ENCODE measurements at regions of chr22 and their contacts with region 1.

Region 1: GRCh38 chr22:19986410-19987341 is 29.9 kb downstream of the ARVCF start:
- DNase-seq: peak; percentile 66
- ATAC-seq: peak; percentile 78
- H3K4me3 ChIP-seq: peak overlapping the region; percentile 78
- H3K27ac ChIP-seq: no peak overlapping the region
- H3K4me1 ChIP-seq: peaks cover 18% of the 10 kb centered on the region
- H3K27me3 ChIP-seq: no peaks in the 10 kb centered on the region
- CTCF ChIP-seq: no peak

Region 2: DNA sequence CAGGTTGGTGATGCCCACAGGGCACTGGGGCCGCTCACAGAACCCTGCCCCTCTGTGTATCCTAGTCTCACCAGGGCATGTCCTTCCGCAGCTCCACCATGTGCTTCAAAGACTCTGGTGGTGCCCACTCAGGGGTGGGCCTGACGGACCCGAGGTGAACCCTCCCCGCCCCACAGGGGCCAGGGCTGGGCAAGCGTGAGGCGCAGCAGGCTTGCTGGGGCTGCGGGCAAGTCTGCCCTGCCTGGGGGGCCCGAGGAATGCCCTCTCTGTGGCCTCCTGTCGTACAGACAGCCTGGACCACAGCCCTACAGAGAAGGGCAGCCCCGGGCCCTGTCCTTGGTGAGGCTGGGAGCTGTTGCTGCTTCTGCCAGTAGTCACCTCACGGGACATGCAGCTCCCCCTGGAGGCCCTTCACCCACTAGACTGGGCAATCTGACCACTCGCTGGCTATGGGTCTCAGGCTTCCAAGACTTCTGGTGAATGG is 185.9 kb before region 1 on chr22:
- CTCF ChIA-PET with region 1: no interaction called
- POLR2A ChIA-PET with region 1: no interaction called
- intact Hi-C with region 1: no loop called
- DNase-seq: no peak
- ATAC-seq: peak; percentile 46; the same call in 1 of the 2 replicates
- H3K4me3 ChIP-seq: no peak overlapping the region
- H3K27ac ChIP-seq: no peak overlapping the region
- H3K4me1 ChIP-seq: peaks cover 2% of the 10 kb centered on the region
- H3K27me3 ChIP-seq: no peaks in the 10 kb centered on the region
- CTCF ChIP-seq: peak; percentile 37

Region 3: DNA sequence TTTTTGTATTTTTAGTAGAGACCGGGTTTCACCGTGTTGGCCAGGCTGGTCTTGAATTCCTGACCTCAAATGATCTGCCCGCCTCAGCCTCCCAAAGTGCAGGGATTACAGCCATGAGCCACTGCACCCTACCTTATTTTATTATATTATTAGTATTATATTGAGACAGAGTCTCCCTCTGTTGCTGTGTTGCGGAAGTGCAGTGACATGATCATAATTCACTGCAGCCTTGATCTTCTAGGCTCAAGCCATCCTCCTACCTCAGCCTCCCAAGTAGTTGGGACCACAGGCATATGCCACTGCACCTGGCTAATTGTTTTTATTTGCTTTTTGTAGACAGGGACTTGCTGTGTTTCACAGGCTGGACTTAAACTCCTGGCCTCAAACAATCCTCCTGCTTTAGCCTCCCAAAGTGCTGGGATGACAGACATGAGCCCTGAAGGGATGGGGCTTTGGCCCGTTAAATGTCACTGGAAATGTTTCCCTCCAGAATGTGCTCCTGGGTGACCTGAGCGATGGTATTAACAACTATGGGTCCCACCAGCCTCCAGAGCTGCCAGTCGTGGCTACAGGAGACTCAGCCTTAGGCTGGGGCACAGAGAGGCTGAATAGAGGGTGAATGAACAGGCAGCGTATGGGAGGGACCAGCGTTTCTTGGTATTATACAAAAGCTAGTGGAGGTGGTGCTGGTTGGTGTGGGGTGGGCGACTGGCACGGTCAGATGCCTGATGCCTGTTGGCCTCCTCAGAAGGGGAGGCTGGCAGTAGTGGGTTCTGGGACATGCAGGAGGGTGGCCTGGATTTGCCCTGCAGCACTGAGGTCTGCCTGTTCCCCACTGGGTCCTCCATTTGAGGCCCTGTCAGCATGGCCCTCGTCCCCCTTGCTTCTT is 41.5 kb after region 1 on chr22:
- CTCF ChIA-PET with region 1: no interaction called
- POLR2A ChIA-PET with region 1: no interaction called
- intact Hi-C with region 1: loop called (anchors 1 kb)
- DNase-seq: peak; percentile 21
- ATAC-seq: peak; percentile 57
- H3K4me3 ChIP-seq: no peak overlapping the region
- H3K27ac ChIP-seq: no peak overlapping the region
- H3K4me1 ChIP-seq: no peaks in the 10 kb centered on the region
- H3K27me3 ChIP-seq: no peaks in the 10 kb centered on the region
- CTCF ChIP-seq: peak; percentile 38; the same call in 1 of the 2 replicates

Region 4: DNA sequence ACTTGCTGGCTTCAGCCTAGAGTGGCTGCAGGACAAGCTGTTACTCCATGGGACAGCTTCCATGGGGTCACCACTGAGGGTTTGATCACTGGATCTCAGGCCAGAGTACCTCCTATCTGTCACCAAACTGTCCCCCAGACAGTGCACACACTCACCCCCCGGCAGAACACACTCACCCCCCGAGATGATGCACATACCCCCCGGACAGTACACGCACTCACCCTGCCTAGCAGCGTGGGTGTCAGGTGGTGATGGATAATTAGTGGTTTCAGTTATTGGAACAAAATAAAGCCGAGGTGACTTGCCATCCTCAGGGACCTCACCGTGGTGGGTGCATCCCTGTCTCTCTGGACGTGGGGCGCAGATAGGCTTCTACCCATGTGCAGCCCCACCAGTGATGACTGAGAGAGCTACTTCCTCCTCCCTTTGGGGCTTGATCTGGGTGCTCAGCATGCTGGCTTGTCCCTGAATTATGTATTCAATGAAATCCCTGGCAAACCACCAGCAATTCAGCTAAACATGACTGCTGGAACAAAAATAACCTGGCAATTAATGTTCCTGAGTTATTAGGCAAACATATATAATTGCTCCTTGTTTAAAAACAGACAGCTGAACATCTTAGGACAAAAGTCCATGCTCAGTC is 53.1 kb after region 1 on chr22:
- CTCF ChIA-PET with region 1: no interaction called
- POLR2A ChIA-PET with region 1: interaction called, 10 read pairs
- intact Hi-C with region 1: no loop called
- DNase-seq: no peak
- ATAC-seq: no peak
- H3K4me3 ChIP-seq: no peak overlapping the region
- H3K27ac ChIP-seq: no peak overlapping the region
- H3K4me1 ChIP-seq: no peaks in the 10 kb centered on the region
- H3K27me3 ChIP-seq: no peaks in the 10 kb centered on the region
- CTCF ChIP-seq: no peak